ENCODE measurements at regions of chr6 and their contacts with region 1.

Region 1: DNA sequence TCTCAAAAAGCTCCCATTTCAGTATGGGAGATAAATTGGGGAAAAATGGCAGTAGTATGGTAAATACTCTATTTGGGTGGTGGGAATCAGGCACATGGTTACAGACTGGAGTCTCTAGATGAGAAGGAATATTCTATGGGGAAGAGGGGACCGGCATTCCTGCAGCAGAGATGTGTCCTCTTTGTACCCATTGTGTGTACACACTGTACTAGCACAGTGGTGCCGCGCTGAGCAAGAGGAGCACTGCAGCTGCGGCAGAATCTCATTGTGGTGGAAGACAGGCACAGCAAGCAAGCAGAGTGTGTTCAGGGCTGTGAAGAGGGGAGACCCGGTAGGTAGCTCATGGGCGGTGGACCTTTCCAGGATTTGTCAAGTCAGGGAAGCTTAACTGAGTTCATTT is 13.0 kb downstream of the AFDN start:
- DNase-seq: no peak
- H3K4me3 ChIP-seq: no peak overlapping the region
- H3K4me3 Mint-ChIP-seq: no peak overlapping the region
- H3K27ac Mint-ChIP-seq: no peak overlapping the region
- H3K4me1 ChIP-seq: peaks cover 48% of the 10 kb centered on the region
- H3K4me1 Mint-ChIP-seq: peaks cover 13% of the 10 kb centered on the region
- H3K27me3 ChIP-seq: no peaks in the 10 kb centered on the region
- H3K27me3 Mint-ChIP-seq: no peaks in the 10 kb centered on the region
- CTCF ChIP-seq: no peak

Region 2: DNA sequence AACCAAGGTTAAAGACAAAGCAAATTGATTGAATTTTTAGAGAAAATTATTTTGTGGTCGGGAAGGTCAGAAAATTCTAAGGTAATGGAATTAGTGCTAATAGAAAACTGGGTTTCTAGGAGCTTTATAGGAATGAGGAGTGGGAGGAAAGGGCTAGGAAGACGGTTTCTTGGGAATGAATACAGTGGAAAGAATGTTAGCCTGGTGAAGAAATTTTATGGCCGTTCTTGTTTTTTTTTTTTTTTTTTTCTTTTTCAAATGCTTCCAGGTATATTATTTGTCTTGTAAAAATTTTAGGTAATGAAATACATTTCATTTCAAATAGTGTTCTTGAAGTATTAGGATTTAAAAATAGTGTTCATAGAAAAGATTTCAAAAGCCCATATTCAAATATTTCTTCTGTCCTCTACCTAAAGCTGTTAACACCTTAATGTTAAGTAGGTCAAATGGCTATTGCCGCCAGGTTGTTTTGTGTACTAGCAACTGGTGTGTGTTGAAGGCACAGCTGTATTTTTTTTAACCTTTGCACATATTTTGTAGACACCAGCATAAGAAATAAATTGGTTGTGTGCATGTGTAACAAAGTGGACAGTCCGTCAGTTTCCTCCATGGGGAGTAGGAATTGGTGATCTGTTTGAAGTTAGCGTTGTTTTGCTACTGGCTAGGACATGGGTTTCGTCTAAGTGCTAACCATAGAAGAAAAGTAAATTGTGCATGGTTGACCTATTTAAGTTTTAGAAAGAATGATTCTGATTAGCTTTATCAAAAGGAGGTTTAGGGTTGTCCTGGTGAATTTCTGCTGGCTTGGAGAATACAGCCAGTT is 19.3 kb after region 1 on chr6:
- CTCF ChIA-PET with region 1: no interaction called
- POLR2A ChIA-PET with region 1: interaction called, 13 read pairs
- intact Hi-C with region 1: no loop called
- DNase-seq: no peak
- H3K4me3 ChIP-seq: no peak overlapping the region
- H3K4me3 Mint-ChIP-seq: no peak overlapping the region
- H3K27ac Mint-ChIP-seq: peak overlapping the region; percentile 43
- H3K4me1 ChIP-seq: peaks cover 41% of the 10 kb centered on the region
- H3K4me1 Mint-ChIP-seq: peaks cover 36% of the 10 kb centered on the region
- H3K27me3 ChIP-seq: no peaks in the 10 kb centered on the region
- H3K27me3 Mint-ChIP-seq: no peaks in the 10 kb centered on the region
- CTCF ChIP-seq: no peak

Measured in Caco-2 (cell line).